MCF 10A (cell line): ENCODE measurements at regions of chr14 and their contacts with region 1.

Region 1: GRCh38 chr14:64891839-64892375 is 12.2 kb upstream of the SPTB start:
- DNase-seq: peak; percentile 71
- H3K4me3 Mint-ChIP-seq: no peak overlapping the region
- H3K27ac Mint-ChIP-seq: no peak overlapping the region
- H3K4me1 Mint-ChIP-seq: no peaks in the 10 kb centered on the region
- H3K27me3 Mint-ChIP-seq: peaks cover 27% of the 10 kb centered on the region
- CTCF ChIP-seq: peak; percentile 63

Region 2: DNA sequence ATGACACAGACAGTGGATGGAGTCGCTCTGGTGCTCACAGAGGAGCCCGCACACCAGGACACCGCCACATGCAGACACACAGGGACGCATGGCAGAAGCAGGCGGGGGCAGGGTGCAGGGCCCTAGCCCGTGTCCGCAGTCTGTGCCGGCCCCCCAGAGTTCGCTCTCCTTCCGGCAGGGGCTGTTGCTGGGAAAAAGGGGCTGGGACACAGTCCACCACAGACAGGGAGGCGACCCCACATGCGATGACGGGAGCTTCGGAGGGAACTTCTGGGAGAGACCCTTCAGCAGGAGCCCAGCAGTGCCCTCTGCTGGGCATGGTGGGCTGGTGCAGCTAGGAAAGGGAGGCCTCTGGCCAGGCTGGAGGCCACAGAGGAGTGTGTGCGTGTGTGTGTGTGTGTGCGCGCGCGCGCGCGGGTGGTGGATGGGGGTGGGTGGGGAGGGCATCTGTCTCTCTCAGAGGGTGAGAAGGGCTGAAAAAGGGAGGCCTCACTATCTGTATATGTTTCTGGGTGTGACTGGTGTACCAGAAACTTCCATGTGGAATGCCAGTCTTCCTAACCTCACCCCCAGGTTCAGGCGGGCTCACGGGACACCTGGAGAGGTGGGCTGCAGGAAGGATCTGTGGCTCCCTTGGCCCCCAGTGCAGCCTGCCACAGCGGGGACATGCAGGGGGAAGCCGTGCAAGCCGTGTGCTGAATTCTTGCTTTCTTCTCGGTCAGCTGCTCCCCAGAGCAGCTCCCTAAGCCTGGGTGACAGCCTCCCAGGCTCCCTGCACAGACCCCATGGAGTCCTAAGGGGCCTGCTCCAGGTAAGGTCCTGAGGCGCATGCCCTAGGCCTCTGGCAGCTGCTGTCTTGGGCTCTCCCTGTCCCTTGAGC is 127.0 kb before region 1 on chr14:
- CTCF ChIA-PET with region 1: interaction called, 42 read pairs
- POLR2A ChIA-PET with region 1: interaction called, 4 read pairs
- intact Hi-C with region 1: loop called (anchors 5 kb)
- DNase-seq: peak; percentile 75
- H3K4me3 Mint-ChIP-seq: no peak overlapping the region
- H3K27ac Mint-ChIP-seq: no peak overlapping the region
- H3K4me1 Mint-ChIP-seq: peaks cover 50% of the 10 kb centered on the region
- H3K27me3 Mint-ChIP-seq: no peaks in the 10 kb centered on the region
- CTCF ChIP-seq: peak; percentile 92

Region 3: DNA sequence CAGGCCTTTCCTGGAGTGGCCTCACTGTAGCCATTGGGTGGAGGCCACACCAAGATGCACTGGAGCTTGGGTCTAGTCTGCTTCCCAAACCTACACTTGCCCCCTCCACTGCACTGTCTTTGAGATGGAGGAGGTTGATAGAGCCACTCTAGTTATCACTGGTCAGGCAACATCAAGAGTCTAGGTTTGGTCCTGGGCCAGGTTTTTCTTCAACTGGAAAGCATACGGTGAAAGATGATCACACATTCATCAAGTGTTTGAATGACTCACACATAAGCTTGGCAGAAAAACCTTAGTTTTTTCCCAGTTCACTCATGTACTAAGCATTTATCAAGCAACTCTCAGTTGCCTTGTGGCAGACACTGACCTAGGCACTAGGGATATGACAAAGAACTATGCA is 103.2 kb before region 1 on chr14:
- CTCF ChIA-PET with region 1: interaction called, 12 read pairs
- POLR2A ChIA-PET with region 1: no interaction called
- intact Hi-C with region 1: no loop called
- DNase-seq: peak; percentile 95
- H3K4me3 Mint-ChIP-seq: no peak overlapping the region
- H3K27ac Mint-ChIP-seq: no peak overlapping the region
- H3K4me1 Mint-ChIP-seq: peaks cover 24% of the 10 kb centered on the region
- H3K27me3 Mint-ChIP-seq: no peaks in the 10 kb centered on the region
- CTCF ChIP-seq: no peak

Region 4: DNA sequence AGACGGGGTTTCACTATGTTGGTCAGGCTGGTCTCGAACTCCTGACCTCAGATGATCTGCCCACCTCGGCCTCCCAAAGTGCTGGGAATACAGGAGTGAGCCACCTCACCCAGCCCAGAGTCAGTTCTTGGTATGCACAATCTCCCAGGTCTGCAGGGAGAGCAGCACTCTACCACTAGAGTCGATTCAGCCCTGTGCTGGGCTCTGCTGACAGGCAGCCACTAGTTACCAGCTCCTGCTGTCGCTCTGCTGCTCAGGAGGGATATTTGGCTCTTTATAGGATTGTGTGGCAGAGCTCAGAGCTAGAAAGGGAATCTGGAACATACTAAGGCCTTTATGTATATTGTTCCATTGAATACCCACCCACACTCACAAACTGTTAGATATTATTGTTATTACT is 56.5 kb before region 1 on chr14:
- CTCF ChIA-PET with region 1: interaction called, 235 read pairs
- POLR2A ChIA-PET with region 1: no interaction called
- intact Hi-C with region 1: no loop called
- DNase-seq: no peak
- H3K4me3 Mint-ChIP-seq: no peak overlapping the region
- H3K27ac Mint-ChIP-seq: no peak overlapping the region
- H3K4me1 Mint-ChIP-seq: no peaks in the 10 kb centered on the region
- H3K27me3 Mint-ChIP-seq: peaks cover 12% of the 10 kb centered on the region
- CTCF ChIP-seq: no peak

Region 5: DNA sequence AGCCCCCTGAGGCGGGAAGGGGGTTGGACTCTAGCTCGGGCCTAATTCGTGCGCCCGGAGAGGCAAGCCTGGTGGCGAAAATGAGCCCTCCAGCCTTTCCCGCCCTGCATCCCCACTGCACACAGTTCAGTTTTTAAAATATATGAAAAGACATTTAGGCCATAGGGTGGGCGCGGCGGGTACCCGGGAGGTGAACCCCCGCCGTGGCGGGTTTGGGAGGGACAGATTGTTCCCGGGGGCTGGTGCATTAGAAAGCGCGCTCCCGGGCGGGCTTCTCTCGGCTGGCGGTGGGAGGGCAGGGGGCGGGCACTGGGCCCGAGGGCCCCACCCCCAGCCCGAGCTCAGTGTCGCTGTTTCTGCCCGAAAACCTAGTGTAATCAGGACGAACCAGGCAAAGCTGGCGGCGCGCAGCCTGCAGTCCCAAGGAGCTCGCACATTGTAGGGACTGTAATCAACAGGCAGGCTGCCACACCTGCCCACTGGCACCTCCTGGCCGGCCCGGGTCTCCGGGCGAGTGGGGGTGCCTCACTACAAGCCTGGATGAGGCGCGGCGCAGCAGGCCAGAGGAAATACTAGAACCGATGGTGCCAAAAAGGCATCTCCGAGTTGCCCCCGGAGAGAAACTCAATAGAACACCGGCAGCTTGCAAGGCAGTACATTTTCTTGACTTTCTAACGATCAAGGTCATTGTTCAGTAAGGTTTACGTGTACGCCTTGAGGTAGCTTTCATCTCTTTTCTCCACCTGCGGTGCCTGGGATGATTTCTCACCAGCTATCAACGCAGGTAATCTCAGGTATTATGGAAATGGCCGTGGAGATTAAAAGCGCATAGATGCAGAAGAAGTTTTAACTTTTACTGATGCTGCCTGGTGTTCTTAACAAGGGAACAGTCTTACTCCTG is 11.4 kb before region 1 on chr14:
- CTCF ChIA-PET with region 1: interaction called, 27 read pairs
- POLR2A ChIA-PET with region 1: interaction called, 3 read pairs
- intact Hi-C with region 1: no loop called
- DNase-seq: peak; percentile 12
- H3K4me3 Mint-ChIP-seq: peak overlapping the region; percentile 50
- H3K27ac Mint-ChIP-seq: no peak overlapping the region
- H3K4me1 Mint-ChIP-seq: peaks cover 8% of the 10 kb centered on the region
- H3K27me3 Mint-ChIP-seq: peaks cover 86% of the 10 kb centered on the region
- CTCF ChIP-seq: no peak